MCF 10A (cell line): ENCODE measurements at regions of chr21 and their contacts with region 1.

Region 1: DNA sequence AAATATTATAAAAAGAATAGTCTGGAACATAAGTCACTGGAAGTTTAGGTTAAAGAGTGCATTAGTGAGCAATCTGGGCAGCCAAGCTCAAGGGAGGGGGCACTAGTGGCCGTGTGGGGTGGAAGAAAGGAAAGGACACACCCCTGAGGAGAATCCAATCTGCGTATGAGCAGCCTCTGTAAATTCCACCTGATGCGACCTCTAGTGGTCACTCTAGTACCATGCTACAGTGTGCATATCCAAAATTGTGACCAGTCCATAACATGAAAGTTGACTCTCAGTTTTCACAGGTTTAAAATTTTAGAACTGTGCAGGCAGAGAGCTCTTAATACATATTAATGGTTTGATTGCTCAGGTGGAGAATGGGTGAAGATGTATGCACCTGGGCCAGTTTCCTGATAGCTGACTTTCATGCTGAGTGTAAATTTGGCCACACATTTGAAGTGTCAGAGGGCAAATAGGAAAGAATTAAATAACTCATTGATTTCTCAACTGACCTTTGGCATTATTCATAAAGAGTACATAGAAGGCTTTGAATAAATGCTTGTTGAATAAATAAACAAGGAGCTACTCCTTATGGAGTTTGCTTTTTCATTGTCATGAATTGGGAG is 105.9 kb upstream of the C21orf91 start:
- DNase-seq: peak; percentile 84
- H3K4me3 Mint-ChIP-seq: no peak overlapping the region
- H3K27ac Mint-ChIP-seq: no peak overlapping the region
- H3K4me1 Mint-ChIP-seq: peaks cover 32% of the 10 kb centered on the region
- H3K27me3 Mint-ChIP-seq: no peaks in the 10 kb centered on the region
- CTCF ChIP-seq: peak; percentile 73

Region 2: GRCh38 chr21:17611414-17612022 is 313.6 kb before region 1 on chr21:
- CTCF ChIA-PET with region 1: interaction called, 4 read pairs
- POLR2A ChIA-PET with region 1: interaction called, 11 read pairs
- intact Hi-C with region 1: no loop called
- DNase-seq: peak; percentile 87
- H3K4me3 Mint-ChIP-seq: peak overlapping the region; percentile 89
- H3K27ac Mint-ChIP-seq: peak overlapping the region; percentile 93
- H3K4me1 Mint-ChIP-seq: peaks cover 10% of the 10 kb centered on the region
- H3K27me3 Mint-ChIP-seq: no peaks in the 10 kb centered on the region
- CTCF ChIP-seq: no peak

Region 3: DNA sequence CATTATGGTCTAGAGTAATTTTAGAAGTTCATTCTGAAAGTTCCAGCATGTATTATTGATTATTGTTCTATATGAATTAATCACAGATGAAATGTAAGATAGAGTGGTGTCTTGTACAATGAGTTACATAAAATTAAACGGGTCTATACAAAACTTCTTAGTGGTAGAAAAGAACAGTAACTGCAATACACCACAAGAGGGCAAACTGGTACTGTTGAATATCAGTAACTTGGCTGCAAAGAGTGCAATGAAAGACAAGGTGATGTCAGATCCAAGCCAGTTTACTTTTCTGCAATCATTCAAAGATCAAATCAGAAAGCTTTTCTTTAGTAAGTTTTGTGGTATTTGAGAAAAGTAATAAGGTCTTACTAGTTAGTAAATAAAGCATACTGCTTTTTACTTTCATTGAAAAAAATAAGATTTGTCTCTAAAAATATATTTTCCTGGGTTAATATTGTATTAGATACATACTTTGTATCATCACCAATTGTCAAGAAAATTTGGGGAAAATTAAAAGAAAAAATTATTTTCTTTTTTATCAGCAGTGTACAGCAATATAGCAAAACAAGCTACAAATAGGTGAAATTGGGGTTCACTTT is 246.0 kb before region 1 on chr21:
- CTCF ChIA-PET with region 1: interaction called, 81 read pairs
- POLR2A ChIA-PET with region 1: interaction called, 8 read pairs
- intact Hi-C with region 1: loop called (anchors 1 kb)
- DNase-seq: peak; percentile 73
- H3K4me3 Mint-ChIP-seq: no peak overlapping the region
- H3K27ac Mint-ChIP-seq: no peak overlapping the region
- H3K4me1 Mint-ChIP-seq: no peaks in the 10 kb centered on the region
- H3K27me3 Mint-ChIP-seq: no peaks in the 10 kb centered on the region
- CTCF ChIP-seq: peak; percentile 80

Region 4: DNA sequence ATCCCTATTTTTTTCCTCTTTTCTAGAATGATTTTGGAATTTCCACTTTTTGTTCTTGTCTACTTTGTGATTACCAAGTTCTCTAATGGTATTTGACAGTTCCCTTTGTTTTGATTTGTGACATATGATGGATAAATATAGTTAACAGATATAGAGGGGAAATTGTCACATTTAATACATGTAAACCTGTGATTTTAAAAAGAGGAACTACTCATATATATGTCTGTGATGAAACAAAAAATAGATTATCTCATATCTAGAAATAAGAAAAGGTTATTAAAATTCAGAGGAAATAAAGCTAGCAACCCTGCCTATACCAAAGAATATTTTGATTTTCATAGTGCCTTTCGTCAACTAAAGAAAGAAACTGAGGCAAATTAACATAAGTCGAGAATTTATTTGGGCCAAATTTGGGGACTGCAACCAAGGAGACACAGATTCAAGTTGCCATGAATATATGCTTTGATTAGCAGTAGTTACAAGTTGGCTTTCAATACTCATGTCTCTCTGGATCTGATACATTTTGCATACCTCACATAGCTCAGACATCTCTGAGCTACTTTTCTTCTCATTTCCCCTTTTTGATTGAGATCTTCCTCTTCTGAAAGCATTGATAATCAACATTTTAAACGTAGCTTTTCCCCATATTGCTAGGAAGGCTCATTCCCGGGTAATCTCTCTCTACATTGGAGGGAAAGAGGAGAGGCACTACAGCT is 90.3 kb before region 1 on chr21:
- CTCF ChIA-PET with region 1: interaction called, 10 read pairs
- POLR2A ChIA-PET with region 1: interaction called, 3 read pairs
- intact Hi-C with region 1: no loop called
- DNase-seq: no peak
- H3K4me3 Mint-ChIP-seq: no peak overlapping the region
- H3K27ac Mint-ChIP-seq: no peak overlapping the region
- H3K4me1 Mint-ChIP-seq: no peaks in the 10 kb centered on the region
- H3K27me3 Mint-ChIP-seq: no peaks in the 10 kb centered on the region
- CTCF ChIP-seq: no peak

Region 5: GRCh38 chr21:17911628-17912027 is 13.5 kb before region 1 on chr21:
- CTCF ChIA-PET with region 1: interaction called, 28 read pairs
- POLR2A ChIA-PET with region 1: interaction called, 10 read pairs
- intact Hi-C with region 1: no loop called
- DNase-seq: peak; percentile 64
- H3K4me3 Mint-ChIP-seq: no peak overlapping the region
- H3K27ac Mint-ChIP-seq: no peak overlapping the region
- H3K4me1 Mint-ChIP-seq: peaks cover 4% of the 10 kb centered on the region
- H3K27me3 Mint-ChIP-seq: no peaks in the 10 kb centered on the region
- CTCF ChIP-seq: no peak

Region 6: DNA sequence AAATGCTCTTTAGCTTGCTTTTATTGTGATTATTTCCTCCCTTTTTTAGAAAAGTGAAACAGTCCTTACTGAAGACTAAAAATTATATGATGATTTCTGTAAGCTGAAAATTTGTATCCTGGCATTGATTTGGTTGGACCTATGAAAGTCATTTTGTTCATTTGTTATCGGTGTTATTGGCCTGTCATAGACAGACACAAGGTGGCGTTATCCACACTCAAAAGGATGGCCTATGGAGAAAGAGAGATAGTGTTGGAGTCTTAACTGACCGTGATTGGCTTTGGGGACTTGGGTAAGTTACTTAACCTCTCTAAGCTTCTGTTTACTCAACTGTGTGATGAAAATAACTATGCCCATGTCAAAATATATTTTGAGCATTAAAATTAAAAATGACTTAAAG is 115.9 kb after region 1 on chr21:
- CTCF ChIA-PET with region 1: interaction called, 36 read pairs
- POLR2A ChIA-PET with region 1: no interaction called
- intact Hi-C with region 1: loop called (anchors 10 kb)
- DNase-seq: peak; percentile 73
- H3K4me3 Mint-ChIP-seq: no peak overlapping the region
- H3K27ac Mint-ChIP-seq: no peak overlapping the region
- H3K4me1 Mint-ChIP-seq: no peaks in the 10 kb centered on the region
- H3K27me3 Mint-ChIP-seq: no peaks in the 10 kb centered on the region
- CTCF ChIP-seq: peak; percentile 53

Region 7: DNA sequence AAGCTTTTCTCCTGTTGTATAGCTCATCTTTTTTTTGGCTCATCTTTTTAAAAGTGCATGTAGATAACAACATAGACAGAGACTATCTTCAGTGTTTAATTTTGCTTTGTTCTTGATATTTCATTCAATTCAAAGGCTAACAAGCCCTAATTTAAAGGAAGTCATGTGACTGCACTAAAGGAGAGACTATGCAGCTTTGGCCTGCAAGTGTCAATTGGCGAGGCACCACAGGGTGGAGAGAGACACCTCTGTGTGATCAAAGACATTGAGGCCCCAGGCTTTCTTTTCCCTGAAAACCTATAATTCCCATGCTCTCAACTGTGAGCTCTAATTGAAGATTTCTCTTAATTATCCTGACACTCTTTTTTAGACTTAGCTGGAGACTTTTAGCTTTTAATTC is 373.1 kb after region 1 on chr21:
- CTCF ChIA-PET with region 1: interaction called, 4 read pairs
- POLR2A ChIA-PET with region 1: no interaction called
- intact Hi-C with region 1: loop called (anchors 5 kb)
- DNase-seq: peak; percentile 11
- H3K4me3 Mint-ChIP-seq: no peak overlapping the region
- H3K27ac Mint-ChIP-seq: no peak overlapping the region
- H3K4me1 Mint-ChIP-seq: no peaks in the 10 kb centered on the region
- H3K27me3 Mint-ChIP-seq: peaks cover 12% of the 10 kb centered on the region
- CTCF ChIP-seq: no peak